IMR-90 (cell line): ENCODE measurements at regions of chr17 and their contacts with region 1.

Region 1: GRCh38 chr17:18141210-18141803 is 32.8 kb downstream of the MYO15A start:
- DNase-seq: peak; percentile 55
- ATAC-seq: peak; percentile 78
- H3K4me3 ChIP-seq: no peak overlapping the region
- H3K27ac ChIP-seq: no peak overlapping the region
- H3K4me1 ChIP-seq: no peaks in the 10 kb centered on the region
- H3K27me3 ChIP-seq: peaks cover 3% of the 10 kb centered on the region; the same call in 1 of the 2 replicates
- CTCF ChIP-seq: peak; percentile 66
- POLR2A ChIP-seq: no peak
- RAD21 ChIP-seq: peak; percentile 71

Region 2: GRCh38 chr17:18217412-18218015 is 76.2 kb after region 1 on chr17:
- CTCF ChIA-PET with region 1: no interaction called
- POLR2A ChIA-PET with region 1: no interaction called
- dilution Hi-C with region 1: no loop called
- in situ Hi-C with region 1: no loop called
- intact Hi-C with region 1: loop called (anchors 1 kb)
- DNase-seq: peak; percentile 45
- ATAC-seq: peak; percentile 83
- H3K4me3 ChIP-seq: no peak overlapping the region
- H3K27ac ChIP-seq: no peak overlapping the region
- H3K4me1 ChIP-seq: peaks cover 12% of the 10 kb centered on the region
- H3K27me3 ChIP-seq: no peaks in the 10 kb centered on the region
- CTCF ChIP-seq: peak; percentile 81
- POLR2A ChIP-seq: no peak
- RAD21 ChIP-seq: peak; percentile 83